Activated CD8-positive, alpha-beta memory T cell treated with anti-CD3 and anti-CD28 coated beads, Interleukin-2, amount 10 ng/mL, durations not matched to agents 7 days and 5 days (primary cell): ENCODE measurements at regions of chr6 and their contacts with region 1.

Region 1: GRCh38 chr6:17803409-17803808 is 96.7 kb upstream of the NUP153 start:
- DNase-seq: no peak
- ATAC-seq: no peak
- H3K4me3 Mint-ChIP-seq: no peak overlapping the region
- H3K27ac Mint-ChIP-seq: no peak overlapping the region
- H3K4me1 Mint-ChIP-seq: peaks cover 6% of the 10 kb centered on the region
- H3K27me3 Mint-ChIP-seq: peaks cover 20% of the 10 kb centered on the region

Region 2: GRCh38 chr6:17584241-17584803 is 219.1 kb before region 1 on chr6:
- CTCF ChIA-PET with region 1: interaction called, 14 read pairs
- DNase-seq: no peak
- ATAC-seq: peak; percentile 56
- H3K4me3 Mint-ChIP-seq: no peak overlapping the region
- H3K27ac Mint-ChIP-seq: no peak overlapping the region
- H3K4me1 Mint-ChIP-seq: peaks cover 8% of the 10 kb centered on the region
- H3K27me3 Mint-ChIP-seq: peaks cover 14% of the 10 kb centered on the region

Region 3: GRCh38 chr6:17599885-17600526 is 203.4 kb before region 1 on chr6 and contains the start of gene FAM8A1:
- CTCF ChIA-PET with region 1: interaction called, 16 read pairs
- DNase-seq: peak; percentile 97
- ATAC-seq: peak; percentile 89
- H3K4me3 Mint-ChIP-seq: peak within 1 kb of the TSS; percentile 81
- H3K27ac Mint-ChIP-seq: peak within 1 kb of the TSS; percentile 86
- H3K4me1 Mint-ChIP-seq: peaks cover 33% of the 10 kb centered on the region
- H3K27me3 Mint-ChIP-seq: no peaks in the 10 kb centered on the region
- total RNA-seq, gene FAM8A1: 7.0 to 9.0 TPM

Region 4: DNA sequence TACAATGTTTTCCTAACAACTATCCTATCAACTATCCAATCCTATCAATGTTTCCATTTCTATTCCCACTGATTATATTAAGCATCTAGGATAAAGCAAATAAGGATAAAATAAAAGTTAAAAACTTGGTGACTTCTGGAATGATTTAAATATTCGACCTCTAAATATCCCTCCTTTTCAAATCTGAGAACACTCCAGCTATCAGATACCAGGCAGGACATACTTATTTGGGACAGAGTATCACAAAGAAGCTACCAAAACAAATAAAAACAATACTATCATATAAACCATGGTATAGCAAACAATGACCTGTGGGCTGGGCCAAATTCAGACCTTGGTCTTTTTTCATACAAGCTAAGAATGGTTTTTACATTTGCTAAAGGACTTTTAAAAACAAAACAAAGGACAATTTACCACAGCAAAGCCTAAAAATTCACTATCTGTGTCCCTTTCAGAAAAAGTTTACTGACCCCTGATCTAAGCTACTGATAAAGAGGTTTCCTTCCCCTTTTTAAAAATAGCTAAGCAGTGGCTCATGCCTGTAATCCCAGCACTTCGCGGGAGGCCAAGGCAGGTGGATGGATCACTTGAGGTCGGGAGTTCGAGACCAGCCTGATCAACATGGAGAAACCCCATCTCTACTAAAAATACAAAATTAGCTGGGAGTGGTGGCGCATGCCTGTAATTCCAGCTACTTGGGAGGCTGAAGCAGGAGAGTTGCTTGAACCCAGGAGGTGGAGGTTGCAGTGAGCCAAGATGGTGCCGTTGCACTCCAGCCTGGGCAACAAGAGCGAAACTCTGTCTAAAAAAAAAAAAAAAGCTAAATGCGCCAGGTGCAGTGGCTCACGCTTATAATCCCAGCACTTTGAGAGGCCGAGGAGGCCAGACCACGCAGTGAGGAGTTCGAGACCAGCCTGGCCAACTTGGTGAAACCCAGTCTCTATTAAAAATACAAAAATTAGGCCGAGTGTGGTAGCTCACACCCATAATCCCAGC is 102.7 kb before region 1 on chr6:
- CTCF ChIA-PET with region 1: interaction called, 22 read pairs
- DNase-seq: no peak
- ATAC-seq: no peak
- H3K4me3 Mint-ChIP-seq: no peak overlapping the region
- H3K27ac Mint-ChIP-seq: peak overlapping the region; percentile 95
- H3K4me1 Mint-ChIP-seq: peaks cover 44% of the 10 kb centered on the region
- H3K27me3 Mint-ChIP-seq: no peaks in the 10 kb centered on the region

Region 5: DNA sequence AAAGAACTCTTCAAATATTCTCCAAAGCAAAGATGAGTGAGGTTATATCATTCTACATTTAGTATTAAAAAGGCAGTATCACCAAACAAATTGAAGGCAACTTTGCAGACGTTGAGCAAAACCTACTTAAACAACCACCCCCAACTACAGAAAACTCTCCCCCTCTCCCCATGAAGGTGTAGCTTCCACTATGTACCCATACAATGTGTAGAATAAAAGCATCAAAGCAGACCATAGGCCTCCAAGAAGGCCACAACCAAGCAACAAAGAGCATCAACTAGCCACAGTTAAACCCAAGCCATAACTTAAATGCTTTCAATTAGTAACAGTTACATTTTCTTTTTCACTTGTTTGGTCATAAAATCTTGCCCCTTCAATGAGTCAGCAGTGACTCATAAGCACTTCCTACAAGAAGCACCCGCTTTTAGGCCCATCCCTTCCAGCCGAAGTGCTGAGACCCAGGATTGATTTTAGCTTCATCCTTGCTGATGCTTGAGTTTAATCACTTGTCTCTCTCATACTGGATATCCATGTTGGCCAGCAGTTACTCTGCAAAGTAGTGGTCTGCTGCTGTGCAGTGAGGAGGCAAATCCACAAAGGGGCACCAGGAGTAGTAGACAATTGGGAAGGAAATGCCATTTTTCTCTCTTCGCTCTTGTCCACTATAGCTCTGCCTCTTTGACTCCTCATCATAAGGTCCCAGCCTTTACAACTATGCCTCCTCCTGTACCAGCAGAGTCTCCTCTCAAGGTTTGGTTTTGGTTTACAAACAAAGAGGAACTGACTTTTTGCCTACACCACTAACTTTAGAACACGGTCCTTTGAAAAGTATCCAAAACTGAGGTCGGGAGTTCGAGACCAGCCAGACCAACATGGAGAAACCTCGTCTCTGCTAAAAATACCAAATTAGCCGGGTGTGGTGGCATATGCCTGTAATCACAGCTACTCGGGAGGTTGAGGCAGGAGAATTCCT is 88.2 kb before region 1 on chr6:
- CTCF ChIA-PET with region 1: interaction called, 16 read pairs
- DNase-seq: peak; percentile 77
- ATAC-seq: peak; percentile 98
- H3K4me3 Mint-ChIP-seq: peak overlapping the region; percentile 72
- H3K27ac Mint-ChIP-seq: peak overlapping the region; percentile 98
- H3K4me1 Mint-ChIP-seq: peaks cover 33% of the 10 kb centered on the region
- H3K27me3 Mint-ChIP-seq: peaks cover 4% of the 10 kb centered on the region

Region 6: DNA sequence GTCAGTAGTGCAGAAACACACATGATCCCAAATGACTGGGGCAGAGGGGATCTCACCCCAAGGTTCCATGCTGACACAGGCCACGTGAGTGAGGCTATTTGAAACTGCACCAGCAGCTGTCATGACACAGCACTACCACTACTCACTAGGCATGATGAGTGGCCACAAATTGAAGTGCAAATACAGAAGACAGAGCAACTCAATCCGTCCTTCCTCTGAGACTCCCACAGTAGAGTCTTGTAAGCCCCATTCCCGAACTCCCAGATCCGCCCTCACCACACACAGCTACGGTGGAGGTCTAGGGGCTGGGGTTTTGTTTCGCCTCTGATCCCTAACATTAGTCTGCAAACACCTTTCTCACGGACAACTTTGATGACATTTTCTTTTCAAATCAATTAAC is 16.6 kb after region 1 on chr6:
- CTCF ChIA-PET with region 1: interaction called, 29 read pairs
- DNase-seq: no peak
- ATAC-seq: no peak
- H3K4me3 Mint-ChIP-seq: no peak overlapping the region
- H3K27ac Mint-ChIP-seq: no peak overlapping the region
- H3K4me1 Mint-ChIP-seq: no peaks in the 10 kb centered on the region
- H3K27me3 Mint-ChIP-seq: peaks cover 5% of the 10 kb centered on the region

Region 7: DNA sequence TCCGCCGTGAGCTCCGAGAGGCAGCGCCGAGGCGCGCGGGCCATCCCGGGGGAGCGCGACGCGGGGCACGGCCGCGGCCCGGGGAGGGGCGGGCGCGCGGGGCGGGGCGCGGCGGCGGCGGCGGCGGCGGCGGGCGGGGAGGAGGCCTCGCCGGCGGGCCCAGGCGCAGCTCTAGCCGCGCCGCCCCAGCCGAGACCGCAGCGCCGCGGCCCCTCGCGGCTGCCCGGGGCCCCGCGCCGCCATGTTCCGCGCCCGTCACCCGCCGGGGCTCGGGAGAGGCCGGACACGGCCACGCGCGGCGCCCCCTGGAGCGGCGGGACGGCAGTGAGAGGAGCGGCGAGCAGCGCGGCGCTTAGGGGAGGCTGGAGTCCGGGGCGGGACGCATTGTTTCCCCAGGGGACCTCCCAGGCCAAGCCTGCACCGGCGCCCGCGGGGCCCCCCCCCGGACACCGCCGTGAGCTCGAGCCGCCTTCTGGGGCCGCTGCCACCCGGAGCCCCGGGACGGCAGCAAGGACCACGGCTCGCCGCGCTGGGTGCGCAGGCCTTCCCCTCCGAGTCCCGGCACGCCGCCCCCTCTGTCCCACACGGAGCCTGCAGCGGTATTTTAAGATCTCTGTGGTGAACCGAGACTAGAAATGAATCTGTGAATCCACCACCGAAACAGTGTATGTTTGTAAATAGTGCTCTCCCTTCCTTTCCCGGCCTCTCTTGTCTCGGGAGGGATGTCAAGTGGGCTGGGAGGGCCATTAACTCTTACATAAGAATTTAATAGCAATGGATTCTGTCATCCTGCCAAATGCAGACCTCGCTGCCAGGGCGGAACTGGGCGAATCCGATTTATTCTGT is 184.4 kb after region 1 on chr6 and contains the start of gene KIF13A:
- CTCF ChIA-PET with region 1: no interaction called
- DNase-seq: peak; percentile 57
- ATAC-seq: peak; percentile 74
- H3K4me3 Mint-ChIP-seq: peak within 1 kb of the TSS; percentile 72
- H3K27ac Mint-ChIP-seq: no peak within 1 kb of the TSS
- H3K4me1 Mint-ChIP-seq: peaks cover 11% of the 10 kb centered on the region
- H3K27me3 Mint-ChIP-seq: peaks cover 73% of the 10 kb centered on the region
- total RNA-seq, gene KIF13A: 0.05 TPM in 1 of 2 experiments, not detected in the other